ENCODE measurements at regions of chr12 and their contacts with region 1.

Region 1: GRCh38 chr12:49651855-49652254 is 28.5 kb downstream of the PRPF40B start:
- DNase-seq: no peak
- H3K4me3 Mint-ChIP-seq: no peak overlapping the region
- H3K27ac Mint-ChIP-seq: peak overlapping the region; percentile 34
- H3K4me1 Mint-ChIP-seq: peaks cover 33% of the 10 kb centered on the region
- H3K27me3 Mint-ChIP-seq: no peaks in the 10 kb centered on the region

Region 2: DNA sequence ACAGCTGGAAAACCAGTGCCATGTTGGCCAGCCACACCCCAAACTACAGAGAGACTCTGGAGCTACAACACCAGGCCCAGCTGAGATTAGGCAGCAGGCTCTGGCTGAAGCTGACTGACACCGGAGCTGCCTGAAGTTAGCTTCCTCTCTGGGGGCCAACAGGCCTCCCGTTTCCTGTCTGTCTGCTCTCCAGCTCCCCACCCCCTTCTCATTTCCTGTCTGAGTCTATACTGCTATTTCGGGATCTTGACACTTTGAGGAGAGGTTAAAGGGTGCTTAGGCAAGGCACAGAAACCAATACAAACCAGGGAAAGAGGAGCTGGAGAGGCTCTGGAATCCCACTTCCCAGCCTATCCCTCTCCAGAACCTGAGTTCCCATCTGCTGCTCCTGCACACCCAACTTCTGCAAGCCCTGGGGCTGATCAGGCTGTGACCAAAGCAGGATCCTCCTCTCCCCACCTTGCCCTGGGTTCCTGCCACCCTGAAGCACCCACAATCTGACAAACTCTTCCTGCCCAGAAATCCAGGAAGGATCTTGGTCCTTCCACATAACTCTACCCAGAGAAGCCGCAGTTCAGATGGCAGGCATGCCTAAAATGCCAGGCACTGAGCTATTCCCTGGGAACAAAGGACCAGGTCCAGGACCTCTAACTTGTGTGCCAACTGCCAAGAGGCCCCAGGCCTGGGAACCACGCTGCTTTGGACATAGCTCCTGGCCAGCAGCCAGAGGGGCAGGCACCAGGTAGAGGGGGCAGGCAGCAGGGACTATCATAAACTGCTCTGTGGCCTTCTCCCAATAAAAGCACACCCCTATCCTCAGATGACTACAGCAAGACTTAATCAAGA is 11.4 kb after region 1 on chr12:
- CTCF ChIA-PET with region 1: interaction called, 10 read pairs
- POLR2A ChIA-PET with region 1: no interaction called
- DNase-seq: peak; percentile 85
- H3K4me3 Mint-ChIP-seq: peak overlapping the region; percentile 69
- H3K27ac Mint-ChIP-seq: peak overlapping the region; percentile 96
- H3K4me1 Mint-ChIP-seq: peaks cover 70% of the 10 kb centered on the region
- H3K27me3 Mint-ChIP-seq: no peaks in the 10 kb centered on the region

Measured in activated CD4-positive, alpha-beta T cell treated with anti-CD3 and anti-CD28 coated beads, Interleukin-2, amount 10 ng/mL, durations not matched to agents 7 days and 5 days (primary cell).